Adrenal gland (tissue), 19 donors: ENCODE measurements at regions of chr18 and their contacts with region 1.

Region 1: GRCh38 chr18:5628512-5629255 is 84.9 kb upstream of the EPB41L3 start:
- DNase-seq: peak; percentile 58 to 80 (median 61)
- H3K4me3 ChIP-seq: peak overlapping the region; percentile 55 to 88 (median 70)
- H3K27ac ChIP-seq: peak overlapping the region in 4 of 5 donors; percentile 3 to 90 (median 80)
- H3K4me1 ChIP-seq: peaks cover 6 to 11% of the 10 kb centered on the region in 2 donors
- H3K27me3 ChIP-seq: no peaks in the 10 kb centered on the region
- CTCF ChIP-seq: no peak
- POLR2A ChIP-seq: peak; percentile 63 to 67

Region 2: GRCh38 chr18:5417342-5417741 is 211.3 kb before region 1 on chr18:
- intact Hi-C with region 1: no loop called
- DNase-seq: peak; percentile 33 to 78 (median 52)
- H3K4me3 ChIP-seq: no peak overlapping the region
- H3K27ac ChIP-seq: peak overlapping the region in 2 of 5 donors; percentile 55 to 59
- H3K4me1 ChIP-seq: peaks cover 6 to 11% of the 10 kb centered on the region in 2 donors
- H3K27me3 ChIP-seq: no peaks in the 10 kb centered on the region
- CTCF ChIP-seq: no peak
- POLR2A ChIP-seq: no peak

Region 3: GRCh38 chr18:5568416-5568815 is 60.3 kb before region 1 on chr18:
- intact Hi-C with region 1: loop called in 1 of 2 experiments (anchors 10 kb)
- DNase-seq: no peak
- H3K4me3 ChIP-seq: no peak overlapping the region
- H3K27ac ChIP-seq: no peak overlapping the region
- H3K4me1 ChIP-seq: peaks cover 8 to 16% of the 10 kb centered on the region in 2 donors
- H3K27me3 ChIP-seq: no peaks in the 10 kb centered on the region
- CTCF ChIP-seq: no peak
- POLR2A ChIP-seq: no peak

Region 4: GRCh38 chr18:5596585-5596984 is 32.1 kb before region 1 on chr18:
- intact Hi-C with region 1: no loop called
- DNase-seq: no peak
- H3K4me3 ChIP-seq: no peak overlapping the region
- H3K27ac ChIP-seq: no peak overlapping the region
- H3K4me1 ChIP-seq: peaks cover 0 to 13% of the 10 kb centered on the region in 2 donors
- H3K27me3 ChIP-seq: no peaks in the 10 kb centered on the region
- CTCF ChIP-seq: no peak
- POLR2A ChIP-seq: no peak